ENCODE measurements at regions of chr11 and their contacts with region 1.

Region 1: GRCh38 chr11:133134314-133135173 is 397.8 kb downstream of the OPCML start:
- DNase-seq: peak; percentile 40
- H3K4me3 ChIP-seq: no peak overlapping the region
- H3K27ac ChIP-seq: no peak overlapping the region
- H3K4me1 ChIP-seq: no peaks in the 10 kb centered on the region
- H3K27me3 ChIP-seq: peaks cover 4% of the 10 kb centered on the region
- CTCF ChIP-seq: peak; percentile 89 to 94

Region 2: GRCh38 chr11:133821776-133822175 is 687.2 kb after region 1 on chr11:
- CTCF ChIA-PET with region 1: no interaction called
- dilution Hi-C with region 1: loop called (anchors 25 kb)
- in situ Hi-C with region 1: no loop called
- intact Hi-C with region 1: no loop called
- DNase-seq: no peak
- H3K4me3 ChIP-seq: no peak overlapping the region
- H3K27ac ChIP-seq: no peak overlapping the region
- H3K4me1 ChIP-seq: no peaks in the 10 kb centered on the region
- H3K27me3 ChIP-seq: no peaks in the 10 kb centered on the region
- CTCF ChIP-seq: peak; percentile 51 to 61

Region 3: GRCh38 chr11:133834682-133835592 is 700.4 kb after region 1 on chr11:
- CTCF ChIA-PET with region 1: interaction called, 7 read pairs
- dilution Hi-C with region 1: no loop called
- in situ Hi-C with region 1: no loop called
- intact Hi-C with region 1: loop called (anchors 1 kb)
- DNase-seq: peak; percentile 59
- H3K4me3 ChIP-seq: no peak overlapping the region
- H3K27ac ChIP-seq: no peak overlapping the region
- H3K4me1 ChIP-seq: peaks cover 2% of the 10 kb centered on the region
- H3K27me3 ChIP-seq: no peaks in the 10 kb centered on the region
- CTCF ChIP-seq: peak; percentile 73 to 77

Measured in mammary epithelial cell (primary cell).